Activated CD4-positive, alpha-beta T cell treated with anti-CD3 and anti-CD28 coated beads for 36 hours (primary cell): ENCODE measurements at regions of chr2 and their contacts with region 1.

Region 1: DNA sequence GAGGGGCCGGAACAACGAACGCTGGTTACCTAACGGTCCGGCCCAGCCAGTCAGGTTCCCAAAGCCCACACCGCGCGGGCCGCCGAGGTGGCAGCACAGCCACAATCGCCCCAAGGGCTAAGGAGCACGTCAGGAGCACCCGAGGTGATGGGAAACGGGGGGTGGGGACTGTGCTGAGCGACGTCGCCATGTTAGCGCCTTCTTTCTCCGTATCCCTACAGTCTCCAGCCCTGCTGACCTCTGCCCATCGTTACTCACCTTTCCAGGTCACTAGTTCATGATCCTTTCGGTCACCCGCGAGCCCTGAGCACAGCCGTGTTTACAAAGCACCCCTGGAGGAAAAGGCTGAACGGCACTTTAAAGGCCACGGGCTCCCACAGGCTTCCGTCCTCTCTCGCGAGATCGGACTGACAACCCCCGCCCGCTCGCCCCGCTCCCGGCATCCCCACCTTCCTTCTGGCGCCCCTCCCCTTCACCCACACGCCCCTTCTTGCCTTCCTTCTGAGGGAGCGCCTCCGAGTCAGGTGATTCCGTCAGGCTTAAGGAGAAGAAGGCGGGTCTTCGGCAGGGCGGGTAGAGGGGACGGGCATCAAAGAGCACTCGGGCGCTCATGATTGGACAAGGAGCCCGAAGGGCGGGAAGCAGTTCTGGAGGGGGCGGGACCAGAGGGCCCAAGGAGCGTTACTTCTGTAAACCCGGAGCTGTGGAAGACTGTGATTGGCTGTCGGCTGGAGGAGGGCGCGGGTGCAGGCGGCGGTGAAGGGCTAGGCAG is at the start of gene ATF2:
- DNase-seq: peak; percentile 98
- ATAC-seq: peak; percentile 95
- H3K4me3 Mint-ChIP-seq: peak within 1 kb of the TSS; percentile 95
- H3K27ac Mint-ChIP-seq: peak within 1 kb of the TSS; percentile 99
- H3K4me1 Mint-ChIP-seq: peaks cover 35% of the 10 kb centered on the region
- H3K27me3 Mint-ChIP-seq: no peaks in the 10 kb centered on the region
- total RNA-seq, gene ATF2: 52.2 to 67.5 TPM

Region 2: DNA sequence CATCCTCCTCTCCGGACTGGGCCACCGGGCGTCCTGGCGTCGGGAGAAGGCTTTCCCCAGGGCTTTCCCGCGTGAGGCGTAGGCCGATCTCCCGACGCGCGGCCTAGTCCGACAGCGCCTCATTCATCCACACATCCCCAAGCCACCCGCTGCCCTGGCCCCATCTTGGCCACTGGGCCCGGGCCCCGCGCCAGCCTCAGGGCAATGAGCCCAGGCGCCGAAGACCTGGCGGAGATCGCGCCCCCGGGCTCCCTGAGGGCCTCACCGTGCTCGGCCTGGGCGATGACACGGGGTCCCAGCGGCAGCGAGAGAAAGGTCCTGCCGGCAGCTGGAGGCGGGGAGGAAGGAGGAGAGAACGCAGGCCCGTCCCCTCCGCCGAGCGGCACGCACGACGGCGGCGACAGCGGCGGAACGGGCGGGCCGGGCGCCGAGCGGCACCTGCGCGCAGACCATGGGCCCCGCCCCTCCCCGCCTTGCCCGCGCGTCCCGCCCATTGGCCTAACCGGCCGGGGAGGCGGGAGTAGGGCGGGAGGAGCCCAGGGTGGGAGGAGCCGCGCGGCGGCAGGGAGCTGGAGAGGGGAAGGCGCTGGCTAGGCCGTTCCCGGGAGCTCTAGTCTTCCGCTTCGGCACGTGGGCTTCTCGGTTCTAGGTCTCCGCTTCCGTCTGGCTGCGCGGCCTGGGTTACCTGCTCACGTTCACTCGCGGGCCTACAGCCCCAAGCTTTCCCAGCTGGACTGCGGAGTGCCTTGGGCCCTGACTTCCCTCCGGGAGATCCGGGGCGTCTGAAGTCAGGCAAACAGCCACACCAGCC is 919.6 kb before region 1 on chr2 and contains the start of gene OLA1:
- CTCF ChIA-PET with region 1: no interaction called
- POLR2A ChIA-PET with region 1: no interaction called
- intact Hi-C with region 1: loop called in 1 of 2 experiments (anchors 5 kb)
- DNase-seq: peak; percentile 98
- ATAC-seq: peak; percentile 97
- H3K4me3 Mint-ChIP-seq: peak within 1 kb of the TSS; percentile 90
- H3K27ac Mint-ChIP-seq: peak within 1 kb of the TSS; percentile 85
- H3K4me1 Mint-ChIP-seq: peaks cover 31% of the 10 kb centered on the region
- H3K27me3 Mint-ChIP-seq: no peaks in the 10 kb centered on the region
- total RNA-seq, gene OLA1: 136 to 157 TPM

Region 3: GRCh38 chr2:174593574-174594203 is 574.3 kb before region 1 on chr2:
- CTCF ChIA-PET with region 1: no interaction called
- POLR2A ChIA-PET with region 1: no interaction called
- intact Hi-C with region 1: loop called in 1 of 2 experiments (anchors 5 kb)
- DNase-seq: peak; percentile 80
- ATAC-seq: peak; percentile 67
- H3K4me3 Mint-ChIP-seq: peak overlapping the region; percentile 70
- H3K27ac Mint-ChIP-seq: peak overlapping the region; percentile 97
- H3K4me1 Mint-ChIP-seq: peaks cover 63% of the 10 kb centered on the region
- H3K27me3 Mint-ChIP-seq: no peaks in the 10 kb centered on the region

Region 4: DNA sequence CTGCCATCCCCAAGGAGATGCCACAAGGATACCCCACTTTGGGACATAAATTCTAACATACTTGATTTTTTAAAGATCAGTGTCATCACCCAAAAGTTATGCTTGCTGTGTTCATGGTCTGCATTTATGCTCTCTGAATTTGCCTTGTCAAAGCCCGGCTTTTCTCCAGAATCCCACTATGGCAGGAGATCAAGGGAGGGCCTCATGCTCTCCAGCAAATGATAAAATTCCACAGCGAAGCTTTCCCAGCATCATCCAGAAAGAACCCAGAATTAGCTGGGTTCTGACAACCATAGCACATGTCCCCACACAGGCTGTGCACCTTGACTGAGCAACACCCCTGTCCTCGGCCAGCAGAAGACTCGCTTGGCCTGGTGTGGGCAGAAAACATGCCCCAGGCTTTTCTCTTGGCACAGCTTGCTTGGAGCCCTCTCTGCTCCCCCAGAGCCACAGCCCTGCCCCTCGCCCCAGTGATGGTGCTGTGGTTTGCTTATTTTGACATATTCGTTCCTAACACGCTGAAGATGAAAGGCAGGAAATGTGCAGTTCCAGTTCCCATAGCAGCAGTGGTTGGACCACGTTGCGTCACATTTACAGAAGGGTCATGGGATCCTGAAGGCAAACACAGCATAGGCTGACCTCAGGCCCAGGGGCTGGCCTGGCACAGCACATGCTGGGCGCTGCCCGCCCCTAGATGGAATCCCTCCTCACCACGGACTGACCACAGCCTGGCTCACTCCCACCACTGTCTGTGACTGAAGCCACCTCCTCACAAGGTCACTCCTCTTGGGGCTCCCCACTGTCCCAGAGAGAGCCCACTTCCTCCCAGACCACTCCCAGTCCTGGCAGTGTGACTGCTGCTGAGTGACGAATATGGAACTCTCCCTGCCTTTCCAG is 389.6 kb before region 1 on chr2:
- CTCF ChIA-PET with region 1: no interaction called
- POLR2A ChIA-PET with region 1: no interaction called
- intact Hi-C with region 1: loop called in 1 of 2 experiments (anchors 5 kb)
- DNase-seq: peak; percentile 86
- ATAC-seq: peak; percentile 94
- H3K4me3 Mint-ChIP-seq: peak overlapping the region; percentile 13
- H3K27ac Mint-ChIP-seq: peak overlapping the region; percentile 73
- H3K4me1 Mint-ChIP-seq: peaks cover 48% of the 10 kb centered on the region
- H3K27me3 Mint-ChIP-seq: no peaks in the 10 kb centered on the region

Region 5: DNA sequence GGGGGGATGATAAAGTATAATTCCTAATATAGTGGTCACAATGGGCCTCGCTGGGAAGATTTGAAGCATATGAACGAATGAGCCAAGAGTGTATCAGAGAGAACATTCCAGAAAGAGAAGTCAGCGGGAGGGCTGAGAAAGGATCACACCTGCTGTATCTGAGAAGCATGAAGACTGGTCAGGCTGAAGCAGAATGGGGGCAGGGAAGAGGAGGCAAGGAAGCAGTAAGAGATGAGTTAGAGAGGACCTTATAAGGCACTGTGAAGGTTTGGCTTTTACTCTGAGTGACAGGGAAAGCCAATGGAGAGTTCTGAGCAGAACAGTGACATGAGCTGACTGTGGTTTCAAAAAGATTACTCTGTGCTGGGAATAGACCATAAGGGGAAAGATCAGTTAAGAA is 236.3 kb before region 1 on chr2:
- CTCF ChIA-PET with region 1: no interaction called
- POLR2A ChIA-PET with region 1: no interaction called
- intact Hi-C with region 1: no loop called
- DNase-seq: no peak
- ATAC-seq: no peak
- H3K4me3 Mint-ChIP-seq: no peak overlapping the region
- H3K27ac Mint-ChIP-seq: no peak overlapping the region
- H3K4me1 Mint-ChIP-seq: no peaks in the 10 kb centered on the region
- H3K27me3 Mint-ChIP-seq: no peaks in the 10 kb centered on the region

Region 6: GRCh38 chr2:175154661-175155082 is 13.3 kb before region 1 on chr2:
- CTCF ChIA-PET with region 1: interaction called, 3 read pairs
- POLR2A ChIA-PET with region 1: interaction called, 3 read pairs
- intact Hi-C with region 1: loop called (anchors 1 to 2 kb)
- DNase-seq: no peak
- ATAC-seq: peak; percentile 82
- H3K4me3 Mint-ChIP-seq: no peak overlapping the region
- H3K27ac Mint-ChIP-seq: peak overlapping the region; percentile 62
- H3K4me1 Mint-ChIP-seq: peaks cover 40% of the 10 kb centered on the region
- H3K27me3 Mint-ChIP-seq: no peaks in the 10 kb centered on the region

Region 7: GRCh38 chr2:175181104-175181876 is 13.3 kb after region 1 on chr2 and contains the start of gene ATP5MC3:
- CTCF ChIA-PET with region 1: interaction called, 9 read pairs
- POLR2A ChIA-PET with region 1: interaction called, 21 read pairs
- intact Hi-C with region 1: loop called (anchors 1 kb)
- DNase-seq: peak; percentile 96
- ATAC-seq: peak; percentile 95
- H3K4me3 Mint-ChIP-seq: peak within 1 kb of the TSS; percentile 95
- H3K27ac Mint-ChIP-seq: peak within 1 kb of the TSS; percentile 94
- H3K4me1 Mint-ChIP-seq: peaks cover 32% of the 10 kb centered on the region
- H3K27me3 Mint-ChIP-seq: no peaks in the 10 kb centered on the region
- total RNA-seq, gene ATP5MC3: 244 to 386 TPM

Region 8: GRCh38 chr2:176001916-176002687 is 834.1 kb after region 1 on chr2 and contains the start of gene LNPK:
- CTCF ChIA-PET with region 1: no interaction called
- POLR2A ChIA-PET with region 1: no interaction called
- intact Hi-C with region 1: loop called in 1 of 2 experiments (anchors 5 kb)
- DNase-seq: peak; percentile 95
- ATAC-seq: peak; percentile 93
- H3K4me3 Mint-ChIP-seq: peak within 1 kb of the TSS; percentile 99
- H3K27ac Mint-ChIP-seq: peak within 1 kb of the TSS; percentile 95
- H3K4me1 Mint-ChIP-seq: peaks cover 19% of the 10 kb centered on the region
- H3K27me3 Mint-ChIP-seq: no peaks in the 10 kb centered on the region
- total RNA-seq, gene LNPK: 27.3 to 36.0 TPM